A549 (cell line): ENCODE measurements at regions of chr5 and their contacts with region 1.

Region 1: DNA sequence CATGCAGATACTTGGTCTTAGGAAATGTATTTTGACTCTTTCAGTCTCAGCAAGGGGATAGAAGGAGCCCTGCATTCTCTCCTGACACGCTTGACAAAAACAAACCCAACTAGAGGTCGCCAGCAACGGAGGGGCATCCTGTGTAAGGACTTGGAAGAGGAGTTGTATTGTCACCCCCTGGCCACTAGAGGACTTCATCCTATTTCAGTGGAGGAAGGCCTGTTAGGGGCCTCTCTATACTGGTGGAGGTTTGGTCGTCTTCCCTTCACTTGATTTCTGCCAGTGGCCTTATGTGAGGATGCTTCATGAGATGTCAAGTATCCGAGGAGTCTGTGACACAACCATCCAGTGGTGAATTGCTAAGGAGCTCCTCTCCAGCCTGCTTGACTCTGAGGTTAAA is 122.8 kb upstream of the STC2 start:
- DNase-seq: peak; percentile 33 to 62
- ATAC-seq: no peak
- H3K4me3 ChIP-seq: no peak overlapping the region
- H3K27ac ChIP-seq: peak overlapping the region; percentile 30 to 86; a peak in 4 of 6 replicates
- H3K4me1 ChIP-seq: peaks cover 45% of the 10 kb centered on the region
- CTCF ChIP-seq: no peak; the same call in 2 of the 3 replicates
- EP300 ChIP-seq: no peak
- POLR2A ChIP-seq: no peak
- RAD21 ChIP-seq: peak in 1 of 2 experiments; percentile 28; a peak in 2 of 5 replicates

Region 2: DNA sequence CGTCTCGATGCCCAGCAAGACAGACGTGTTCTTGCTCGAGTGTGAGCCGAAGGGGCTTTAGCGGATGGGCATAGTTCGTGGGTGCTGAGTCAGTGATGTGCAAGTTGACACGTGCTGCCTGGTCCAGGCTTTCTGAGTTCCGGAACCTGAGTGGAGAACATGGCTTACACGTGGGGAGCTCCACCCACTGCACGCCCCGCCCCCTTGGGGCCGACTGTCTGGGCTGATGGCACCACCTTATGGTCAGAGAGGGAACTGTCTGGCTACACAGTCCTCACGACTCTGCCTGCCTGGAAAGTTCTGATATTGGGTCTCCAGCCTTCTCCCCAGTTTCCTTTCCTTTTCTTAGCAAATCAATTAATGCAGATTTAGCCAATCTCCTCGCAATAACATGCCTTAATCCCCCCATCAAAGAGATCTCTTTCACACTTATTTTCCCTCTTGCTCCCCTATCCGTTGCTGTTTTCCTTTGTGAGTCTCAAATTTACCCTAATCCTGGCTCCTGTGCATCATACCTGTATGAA is 119.0 kb before region 1 on chr5:
- CTCF ChIA-PET with region 1: interaction called, 15 read pairs
- POLR2A ChIA-PET with region 1: interaction called, 23 read pairs
- DNase-seq: peak; percentile 79 to 87
- ATAC-seq: peak in 1 of 2 experiments; percentile 69; a peak in 3 of 6 replicates
- H3K4me3 ChIP-seq: no peak overlapping the region
- H3K27ac ChIP-seq: peak overlapping the region; percentile 88 to 97; a peak in 5 of 6 replicates
- H3K4me1 ChIP-seq: peaks cover 23% of the 10 kb centered on the region
- CTCF ChIP-seq: peak; percentile 73
- EP300 ChIP-seq: no peak
- POLR2A ChIP-seq: no peak
- RAD21 ChIP-seq: peak; percentile 84 to 93

Region 3: GRCh38 chr5:173472141-173472543 is 21.1 kb after region 1 on chr5:
- CTCF ChIA-PET with region 1: interaction called, 6 read pairs
- POLR2A ChIA-PET with region 1: interaction called, 16 read pairs
- DNase-seq: peak; percentile 40 to 73
- ATAC-seq: peak; percentile 88 to 93
- H3K4me3 ChIP-seq: no peak overlapping the region
- H3K27ac ChIP-seq: peak overlapping the region; percentile 82 to 83
- H3K4me1 ChIP-seq: peaks cover 26% of the 10 kb centered on the region
- CTCF ChIP-seq: no peak
- EP300 ChIP-seq: no peak
- POLR2A ChIP-seq: no peak
- RAD21 ChIP-seq: no peak

Region 4: DNA sequence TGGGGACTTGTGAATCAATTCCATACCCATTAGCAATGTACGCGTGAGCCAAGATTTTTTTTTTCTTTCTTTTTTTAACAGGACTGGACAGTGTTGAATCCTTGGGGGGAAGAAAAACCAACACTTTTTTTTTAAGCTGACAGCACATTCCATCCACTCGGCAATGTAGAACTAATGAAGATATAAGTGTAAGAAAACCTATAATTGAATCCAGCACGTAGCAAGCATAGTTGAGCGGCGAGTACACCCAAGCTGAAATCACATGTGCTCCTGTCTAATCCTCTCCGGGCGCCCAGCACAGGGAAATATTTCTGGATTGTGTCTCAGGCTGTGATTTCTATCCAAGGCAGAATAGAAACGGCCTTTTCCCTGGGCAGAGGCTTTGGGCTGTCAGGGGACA is 47.3 kb after region 1 on chr5:
- CTCF ChIA-PET with region 1: no interaction called
- POLR2A ChIA-PET with region 1: no interaction called
- DNase-seq: no peak
- ATAC-seq: no peak
- H3K4me3 ChIP-seq: no peak overlapping the region
- H3K27ac ChIP-seq: no peak overlapping the region
- H3K4me1 ChIP-seq: no peaks in the 10 kb centered on the region
- CTCF ChIP-seq: no peak
- EP300 ChIP-seq: no peak
- POLR2A ChIP-seq: no peak
- RAD21 ChIP-seq: no peak